Transverse colon (tissue), 4 donors: ENCODE measurements at regions of chr20 and their contacts with region 1.

Region 1: DNA sequence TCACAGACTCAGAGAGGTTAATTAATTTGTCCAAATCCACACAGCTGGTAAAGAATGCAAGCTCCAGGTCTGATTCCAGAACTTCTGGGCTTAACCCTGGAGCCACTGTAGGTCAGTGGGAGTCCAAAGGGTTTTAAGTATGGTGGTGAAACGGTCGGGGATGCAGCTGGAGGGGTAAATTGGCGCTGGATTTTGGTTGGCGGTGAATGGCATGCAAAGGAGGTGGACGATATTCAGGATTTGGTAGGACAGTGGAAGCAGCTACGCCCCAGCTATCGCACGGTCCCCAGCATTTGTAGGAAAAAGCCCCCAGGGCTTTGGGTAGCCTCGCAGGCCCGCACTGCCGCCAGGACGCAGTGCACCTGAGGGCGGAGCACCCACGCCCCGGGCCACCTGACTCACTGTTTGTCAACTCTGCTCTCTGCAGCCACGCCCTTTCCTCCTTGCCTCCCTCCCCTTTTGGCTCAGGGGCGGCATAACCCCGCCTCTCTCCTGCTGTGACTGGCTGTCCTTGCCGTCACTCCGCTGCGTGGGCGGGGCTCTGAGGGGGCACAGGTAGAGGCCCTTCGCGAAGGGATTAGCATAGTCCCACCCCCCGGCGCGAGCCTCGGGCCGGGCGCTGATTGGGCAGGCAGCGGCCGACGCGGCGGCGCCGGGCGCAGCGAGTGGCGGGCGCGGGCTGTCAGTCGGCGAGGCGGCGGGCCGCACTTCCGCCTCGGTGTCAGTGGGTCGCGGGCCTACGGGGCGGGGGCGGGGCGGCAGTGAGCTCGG is at the start of gene OSBPL2:
- DNase-seq: peak; percentile 100
- H3K4me3 ChIP-seq: peak within 1 kb of the TSS; percentile 88 to 98 (median 93)
- H3K27ac ChIP-seq: peak within 1 kb of the TSS; percentile 87 to 98 (median 94)
- H3K4me1 ChIP-seq: peaks cover 20 to 44% (median 31%) of the 10 kb centered on the region in 4 donors
- H3K27me3 ChIP-seq: no peaks in the 10 kb centered on the region
- CTCF ChIP-seq: no peak
- EP300 ChIP-seq: no peak
- POLR2A ChIP-seq: no peak
- total RNA-seq, gene OSBPL2: 36.2 to 101 (median 73.3) TPM

Region 2: DNA sequence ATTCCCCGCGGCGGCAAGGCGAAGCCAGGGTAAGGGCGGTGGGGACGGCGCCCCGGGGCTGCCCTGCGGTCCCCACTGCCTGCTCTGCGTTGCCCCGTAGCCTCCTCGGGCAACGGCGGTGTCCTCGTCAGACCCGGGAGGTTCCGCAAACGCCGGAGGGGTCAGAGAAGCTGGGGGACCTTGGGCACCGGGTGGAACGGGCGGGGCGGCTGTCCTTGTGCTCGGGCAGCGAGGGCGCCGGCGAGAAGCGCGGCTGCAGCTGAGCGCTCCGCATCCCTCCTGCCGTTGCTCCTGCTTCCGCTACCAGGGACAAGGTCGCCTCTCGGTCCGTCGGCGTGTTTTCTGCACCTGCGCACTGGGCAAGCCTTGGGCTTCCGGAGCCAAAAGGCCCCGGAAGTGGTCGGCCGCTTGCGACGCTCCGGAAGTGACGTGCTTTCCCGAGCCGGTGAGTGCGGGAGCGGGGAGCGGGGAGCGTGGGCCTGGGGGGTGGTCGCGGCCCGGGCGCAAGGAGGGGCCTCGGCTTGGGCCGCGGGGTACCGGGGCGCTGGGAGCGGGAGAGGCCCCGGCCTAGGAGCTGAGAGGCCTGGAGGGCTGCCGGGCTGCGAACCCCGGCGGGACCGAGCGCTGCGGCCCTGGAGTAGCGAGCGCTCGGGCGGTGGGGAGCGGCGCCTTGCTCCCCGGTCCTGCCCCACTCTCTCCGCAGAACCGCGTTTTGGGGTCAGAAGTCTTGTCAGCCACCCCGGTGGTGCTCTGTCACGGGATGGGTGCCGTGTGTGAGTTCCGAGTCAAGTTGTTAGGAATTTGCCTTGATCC is 55.2 kb before region 1 on chr20 and contains the start of gene MTG2:
- in situ Hi-C with region 1: no loop called
- intact Hi-C with region 1: loop called (anchors 10 kb)
- DNase-seq: peak; percentile 96
- H3K4me3 ChIP-seq: peak within 1 kb of the TSS; percentile 70 to 95 (median 88)
- H3K27ac ChIP-seq: peak within 1 kb of the TSS; percentile 94 to 98 (median 96)
- H3K4me1 ChIP-seq: peaks cover 7 to 25% (median 22%) of the 10 kb centered on the region in 4 donors
- H3K27me3 ChIP-seq: no peaks in the 10 kb centered on the region
- CTCF ChIP-seq: peak in 2 of 5 experiments; percentile 8 to 19
- EP300 ChIP-seq: no peak
- POLR2A ChIP-seq: peak; percentile 93
- total RNA-seq, gene MTG2: 9.8 to 58.0 (median 23.1) TPM